Mammary epithelial cell (primary cell): ENCODE measurements at regions of chr3 and their contacts with region 1.

Region 1: GRCh38 chr3:47513125-47513929 is at the start of gene ELP6:
- DNase-seq: peak; percentile 93
- H3K4me3 ChIP-seq: peak within 1 kb of the TSS; percentile 85 to 91 (median 85)
- H3K27ac ChIP-seq: peak within 1 kb of the TSS; percentile 69
- H3K4me1 ChIP-seq: peaks cover 4% of the 10 kb centered on the region
- H3K27me3 ChIP-seq: no peaks in the 10 kb centered on the region
- CTCF ChIP-seq: peak; percentile 15 to 53
- total RNA-seq, gene ELP6: 22.3 to 38.2 TPM

Region 2: GRCh38 chr3:47420511-47421484 is 92.5 kb before region 1 on chr3:
- CTCF ChIA-PET with region 1: no interaction called
- dilution Hi-C with region 1: no loop called
- in situ Hi-C with region 1: no loop called
- intact Hi-C with region 1: loop called (anchors 1 kb)
- DNase-seq: peak; percentile 77
- H3K4me3 ChIP-seq: no peak overlapping the region
- H3K27ac ChIP-seq: no peak overlapping the region
- H3K4me1 ChIP-seq: no peaks in the 10 kb centered on the region
- H3K27me3 ChIP-seq: no peaks in the 10 kb centered on the region
- CTCF ChIP-seq: peak; percentile 94 to 96

Region 3: GRCh38 chr3:47469616-47470015 is 43.7 kb before region 1 on chr3:
- CTCF ChIA-PET with region 1: no interaction called
- dilution Hi-C with region 1: loop called (anchors 5 kb)
- in situ Hi-C with region 1: no loop called
- intact Hi-C with region 1: loop called (anchors 2 kb)
- DNase-seq: no peak
- H3K4me3 ChIP-seq: no peak overlapping the region
- H3K27ac ChIP-seq: no peak overlapping the region
- H3K4me1 ChIP-seq: peaks cover 5% of the 10 kb centered on the region
- H3K27me3 ChIP-seq: no peaks in the 10 kb centered on the region
- CTCF ChIP-seq: no peak

Region 4: GRCh38 chr3:47475570-47476329 is 37.6 kb before region 1 on chr3 and contains the start of gene SCAP:
- CTCF ChIA-PET with region 1: no interaction called
- dilution Hi-C with region 1: loop called (anchors 5 kb)
- in situ Hi-C with region 1: no loop called
- intact Hi-C with region 1: loop called (anchors 2 kb)
- DNase-seq: peak; percentile 79
- H3K4me3 ChIP-seq: peak within 1 kb of the TSS; percentile 89 to 99 (median 94)
- H3K27ac ChIP-seq: peak within 1 kb of the TSS; percentile 55
- H3K4me1 ChIP-seq: peaks cover 5% of the 10 kb centered on the region
- H3K27me3 ChIP-seq: no peaks in the 10 kb centered on the region
- CTCF ChIP-seq: peak; percentile 59 to 87
- total RNA-seq, gene SCAP: 72.5 to 75.4 TPM

Region 5: DNA sequence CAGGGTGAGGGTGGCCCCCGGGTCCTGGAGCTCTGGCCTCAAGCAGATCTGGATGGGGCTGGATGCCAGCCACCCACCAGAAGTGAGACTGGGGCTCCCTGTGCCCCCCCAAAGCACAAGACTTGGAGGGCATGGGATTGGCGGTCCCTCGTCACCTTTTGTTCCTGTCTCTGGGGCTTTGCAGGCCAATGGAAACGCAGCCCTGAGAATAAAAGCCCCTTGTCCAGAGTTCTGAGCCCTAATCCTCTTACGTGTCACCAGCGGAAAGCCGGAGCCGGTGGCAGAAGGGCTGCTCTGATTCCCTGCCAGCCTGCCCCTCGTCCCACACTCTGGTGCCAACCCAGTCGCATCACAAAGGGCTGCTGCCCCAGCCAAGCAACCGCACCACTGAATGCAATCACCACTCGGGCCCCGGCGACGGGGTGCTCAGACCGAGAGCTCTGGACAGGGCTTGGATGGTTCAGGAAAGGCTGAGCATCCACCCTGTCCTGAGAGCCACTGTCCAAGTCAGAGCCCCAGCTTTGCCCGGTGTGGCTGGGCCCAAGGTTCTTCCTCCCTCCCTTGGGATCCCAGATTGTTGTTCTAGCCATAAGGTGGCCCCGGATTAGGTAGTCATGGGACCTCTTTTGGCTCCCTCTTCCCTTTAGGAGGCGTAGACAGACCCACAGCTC is 23.0 kb after region 1 on chr3:
- CTCF ChIA-PET with region 1: no interaction called
- dilution Hi-C with region 1: no loop called
- in situ Hi-C with region 1: no loop called
- intact Hi-C with region 1: no loop called
- DNase-seq: no peak
- H3K4me3 ChIP-seq: no peak overlapping the region
- H3K27ac ChIP-seq: no peak overlapping the region
- H3K4me1 ChIP-seq: no peaks in the 10 kb centered on the region
- H3K27me3 ChIP-seq: peaks cover 2% of the 10 kb centered on the region
- CTCF ChIP-seq: no peak

Region 6: GRCh38 chr3:47781685-47782445 is 268.5 kb after region 1 on chr3 and contains the start of gene SMARCC1:
- CTCF ChIA-PET with region 1: no interaction called
- dilution Hi-C with region 1: no loop called
- in situ Hi-C with region 1: loop called in 1 of 2 experiments (anchors 10 kb)
- intact Hi-C with region 1: no loop called
- DNase-seq: peak; percentile 98
- H3K4me3 ChIP-seq: peak within 1 kb of the TSS; percentile 89 to 93 (median 89)
- H3K27ac ChIP-seq: peak within 1 kb of the TSS; percentile 88
- H3K4me1 ChIP-seq: peaks cover 13% of the 10 kb centered on the region
- H3K27me3 ChIP-seq: no peaks in the 10 kb centered on the region
- CTCF ChIP-seq: no peak
- total RNA-seq, gene SMARCC1: 52.8 to 94.1 TPM

Region 7: DNA sequence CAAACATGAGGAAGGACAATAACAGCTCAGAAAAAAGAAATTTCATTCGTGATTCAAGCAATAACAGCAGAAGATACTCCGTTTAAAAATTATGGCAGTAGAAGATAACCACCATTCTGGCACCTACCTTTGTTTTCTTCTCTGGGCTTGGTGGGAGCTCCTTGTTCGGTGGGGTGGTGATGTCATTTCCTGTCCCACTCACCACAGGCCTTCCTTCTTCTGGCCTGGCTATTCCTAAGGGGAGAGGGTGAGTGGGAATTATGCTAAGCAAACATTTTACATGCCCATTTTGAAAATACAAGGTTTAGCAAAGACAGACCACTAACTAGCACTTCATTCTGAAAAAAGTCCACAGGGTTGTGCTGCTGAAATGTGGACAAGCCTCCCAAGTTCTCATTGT is 364.0 kb after region 1 on chr3:
- CTCF ChIA-PET with region 1: no interaction called
- dilution Hi-C with region 1: no loop called
- in situ Hi-C with region 1: no loop called
- intact Hi-C with region 1: no loop called
- DNase-seq: peak; percentile 18
- H3K4me3 ChIP-seq: no peak overlapping the region
- H3K27ac ChIP-seq: peak overlapping the region; percentile 29
- H3K4me1 ChIP-seq: peaks cover 20% of the 10 kb centered on the region
- H3K27me3 ChIP-seq: no peaks in the 10 kb centered on the region
- CTCF ChIP-seq: no peak